Prostate gland (tissue), 2 donors: ENCODE measurements at regions of chr1 and their contacts with region 1.

Region 1: DNA sequence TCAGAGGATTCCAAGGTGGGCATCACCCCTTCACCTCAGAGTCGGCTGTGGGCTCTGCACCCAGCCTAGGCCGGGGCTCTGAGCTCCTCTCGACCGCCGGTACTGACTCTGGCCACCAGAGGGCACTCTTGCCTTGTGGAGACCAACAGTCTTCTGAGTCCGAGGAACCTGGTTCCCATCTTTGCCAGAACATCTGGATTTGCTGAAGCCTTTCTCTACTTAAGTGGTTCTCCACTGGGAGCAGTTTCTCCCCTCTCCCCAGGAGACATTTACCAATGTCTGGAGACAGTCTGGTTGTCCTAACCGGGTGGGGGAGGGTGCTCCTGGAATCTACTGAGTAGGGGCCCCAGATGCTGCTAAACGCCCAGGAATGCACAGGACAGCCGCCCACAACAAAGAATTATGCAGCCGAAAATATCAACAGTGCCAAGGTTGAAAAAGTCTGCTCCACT is 9.4 kb downstream of the ETV3L start:
- DNase-seq: peak; percentile 77
- H3K4me3 ChIP-seq: no peak overlapping the region
- H3K27ac ChIP-seq: no peak overlapping the region
- H3K4me1 ChIP-seq: no peaks in the 10 kb centered on the region
- H3K27me3 ChIP-seq: no peaks in the 10 kb centered on the region
- CTCF ChIP-seq: peak; percentile 88 to 97 (median 94)
- POLR2A ChIP-seq: no peak

Region 2: GRCh38 chr1:157156058-157156541 is 65.9 kb after region 1 on chr1:
- intact Hi-C with region 1: loop called (anchors 1 kb)
- DNase-seq: peak; percentile 54
- H3K4me3 ChIP-seq: no peak overlapping the region
- H3K27ac ChIP-seq: no peak overlapping the region
- H3K4me1 ChIP-seq: no peaks in the 10 kb centered on the region
- H3K27me3 ChIP-seq: no peaks in the 10 kb centered on the region
- CTCF ChIP-seq: peak; percentile 92 to 100 (median 96)
- POLR2A ChIP-seq: no peak